Panc1 (cell line): ENCODE measurements at regions of chr16 and their contacts with region 1.

Region 1: DNA sequence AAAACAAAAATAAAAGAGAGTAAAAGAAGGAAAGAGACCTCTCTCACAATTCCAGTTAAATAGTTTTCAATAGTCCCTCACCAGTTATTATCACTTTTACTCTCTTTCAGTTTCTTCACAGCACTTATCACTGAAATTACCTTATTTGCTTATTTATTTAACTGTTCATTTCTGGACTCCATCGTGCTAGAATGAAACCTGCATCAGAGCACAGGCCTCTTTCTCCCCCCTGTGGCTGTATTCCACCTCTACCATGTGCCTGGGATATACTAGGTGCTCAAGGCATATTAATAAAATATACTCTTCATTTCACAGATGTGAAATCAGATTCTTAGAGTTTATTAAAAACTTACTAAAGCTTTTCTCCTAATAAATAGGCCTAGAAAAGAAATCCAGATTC is 308.9 kb upstream of the MON1B start:
- DNase-seq: no peak
- ATAC-seq: no peak
- H3K4me3 ChIP-seq: no peak overlapping the region
- H3K27ac ChIP-seq: no peak overlapping the region
- H3K4me1 ChIP-seq: no peaks in the 10 kb centered on the region
- H3K27me3 ChIP-seq: no peaks in the 10 kb centered on the region
- CTCF ChIP-seq: peak; percentile 14; the same call in 1 of the 2 replicates

Region 2: DNA sequence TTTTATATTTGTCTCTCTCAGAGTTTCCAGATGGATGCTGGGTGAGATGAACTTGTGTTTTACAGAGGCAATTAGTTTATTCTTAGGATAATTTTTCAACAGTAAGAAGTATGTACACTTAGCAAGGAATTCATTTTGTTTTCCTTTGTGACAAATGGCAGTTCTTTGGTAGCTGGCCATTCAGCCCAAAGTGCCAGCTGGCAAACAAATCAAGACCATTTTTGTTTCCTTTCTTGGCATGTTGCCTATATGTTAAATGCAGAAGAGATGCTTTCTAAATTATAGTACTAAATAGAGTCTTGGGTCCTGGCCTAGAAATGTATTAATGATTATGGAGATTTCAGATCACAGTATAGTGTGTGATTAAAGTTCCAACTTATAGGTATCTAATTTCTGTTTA is 267.8 kb before region 1 on chr16:
- CTCF ChIA-PET with region 1: no interaction called
- POLR2A ChIA-PET with region 1: no interaction called
- in situ Hi-C with region 1: no loop called
- intact Hi-C with region 1: no loop called
- DNase-seq: no peak
- ATAC-seq: no peak
- H3K4me3 ChIP-seq: no peak overlapping the region
- H3K27ac ChIP-seq: no peak overlapping the region
- H3K4me1 ChIP-seq: no peaks in the 10 kb centered on the region
- H3K27me3 ChIP-seq: no peaks in the 10 kb centered on the region
- CTCF ChIP-seq: no peak

Region 3: DNA sequence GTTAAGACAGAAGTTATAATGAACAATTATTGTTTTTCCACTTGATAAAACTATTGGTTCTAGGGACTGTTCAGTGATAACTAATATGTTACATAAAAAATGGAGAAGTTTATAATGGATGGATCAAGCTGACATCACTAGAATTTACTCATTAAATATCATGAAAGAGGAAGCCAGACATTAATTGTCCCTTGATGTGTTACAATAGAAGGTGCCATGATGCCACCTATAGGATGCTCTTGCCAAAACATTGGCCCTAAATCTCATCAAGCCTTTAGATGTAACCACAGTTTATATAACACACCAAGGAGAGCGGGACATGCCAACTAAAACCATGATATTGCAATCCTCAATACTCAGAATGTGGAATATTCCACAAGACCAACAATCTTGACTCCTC is 161.0 kb after region 1 on chr16:
- CTCF ChIA-PET with region 1: no interaction called
- POLR2A ChIA-PET with region 1: no interaction called
- in situ Hi-C with region 1: no loop called
- intact Hi-C with region 1: no loop called
- DNase-seq: peak; percentile 30
- ATAC-seq: no peak
- H3K4me3 ChIP-seq: no peak overlapping the region
- H3K27ac ChIP-seq: no peak overlapping the region
- H3K4me1 ChIP-seq: no peaks in the 10 kb centered on the region
- H3K27me3 ChIP-seq: no peaks in the 10 kb centered on the region
- CTCF ChIP-seq: peak; percentile 47; the same call in 1 of the 2 replicates

Region 4: DNA sequence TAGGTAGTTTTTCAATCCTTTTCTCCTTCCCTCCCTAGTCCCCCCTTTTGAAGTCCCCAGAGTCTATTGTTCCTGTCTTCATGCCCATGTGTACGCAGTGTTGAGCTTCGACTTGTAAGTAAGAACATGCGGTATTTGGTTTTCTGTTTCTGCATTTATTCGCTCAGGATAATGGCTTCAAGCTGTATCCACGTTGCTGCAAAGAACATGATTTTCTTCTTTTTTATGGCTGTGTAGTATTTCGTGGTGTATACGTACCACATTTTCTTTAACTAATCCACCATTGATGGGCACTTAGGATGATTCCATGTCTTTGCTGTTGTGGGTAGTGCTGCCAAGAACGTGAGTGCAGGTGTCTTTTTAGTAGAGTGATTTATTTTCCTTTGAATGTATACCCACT is 1868.5 kb after region 1 on chr16:
- CTCF ChIA-PET with region 1: interaction called, 11 read pairs
- POLR2A ChIA-PET with region 1: no interaction called
- in situ Hi-C with region 1: no loop called
- intact Hi-C with region 1: no loop called
- DNase-seq: no peak
- ATAC-seq: no peak
- H3K4me3 ChIP-seq: no peak overlapping the region
- H3K27ac ChIP-seq: no peak overlapping the region
- H3K4me1 ChIP-seq: no peaks in the 10 kb centered on the region
- H3K27me3 ChIP-seq: no peaks in the 10 kb centered on the region
- CTCF ChIP-seq: no peak